Activated CD4-positive, alpha-beta T cell treated with anti-CD3 and anti-CD28 coated beads for 36 hours (primary cell): ENCODE measurements at regions of chr15 and their contacts with region 1.

Region 1: GRCh38 chr15:68820295-68821189 is at the start of gene ANP32A:
- DNase-seq: peak; percentile 98
- ATAC-seq: peak; percentile 76
- H3K4me3 Mint-ChIP-seq: peak within 1 kb of the TSS; percentile 99
- H3K27ac Mint-ChIP-seq: peak within 1 kb of the TSS; percentile 98
- H3K4me1 Mint-ChIP-seq: peaks cover 26% of the 10 kb centered on the region
- H3K27me3 Mint-ChIP-seq: no peaks in the 10 kb centered on the region
- total RNA-seq, gene ANP32A: 252 to 439 TPM

Region 2: GRCh38 chr15:68229386-68230156 is 591.0 kb before region 1 on chr15 and contains the start of gene CLN6:
- CTCF ChIA-PET with region 1: no interaction called
- POLR2A ChIA-PET with region 1: no interaction called
- intact Hi-C with region 1: loop called in 1 of 2 experiments (anchors 5 kb)
- DNase-seq: peak; percentile 88
- ATAC-seq: peak; percentile 88
- H3K4me3 Mint-ChIP-seq: peak within 1 kb of the TSS; percentile 99
- H3K27ac Mint-ChIP-seq: peak within 1 kb of the TSS; percentile 95
- H3K4me1 Mint-ChIP-seq: peaks cover 47% of the 10 kb centered on the region
- H3K27me3 Mint-ChIP-seq: no peaks in the 10 kb centered on the region
- total RNA-seq, gene CLN6: 45.1 to 48.2 TPM

Region 3: DNA sequence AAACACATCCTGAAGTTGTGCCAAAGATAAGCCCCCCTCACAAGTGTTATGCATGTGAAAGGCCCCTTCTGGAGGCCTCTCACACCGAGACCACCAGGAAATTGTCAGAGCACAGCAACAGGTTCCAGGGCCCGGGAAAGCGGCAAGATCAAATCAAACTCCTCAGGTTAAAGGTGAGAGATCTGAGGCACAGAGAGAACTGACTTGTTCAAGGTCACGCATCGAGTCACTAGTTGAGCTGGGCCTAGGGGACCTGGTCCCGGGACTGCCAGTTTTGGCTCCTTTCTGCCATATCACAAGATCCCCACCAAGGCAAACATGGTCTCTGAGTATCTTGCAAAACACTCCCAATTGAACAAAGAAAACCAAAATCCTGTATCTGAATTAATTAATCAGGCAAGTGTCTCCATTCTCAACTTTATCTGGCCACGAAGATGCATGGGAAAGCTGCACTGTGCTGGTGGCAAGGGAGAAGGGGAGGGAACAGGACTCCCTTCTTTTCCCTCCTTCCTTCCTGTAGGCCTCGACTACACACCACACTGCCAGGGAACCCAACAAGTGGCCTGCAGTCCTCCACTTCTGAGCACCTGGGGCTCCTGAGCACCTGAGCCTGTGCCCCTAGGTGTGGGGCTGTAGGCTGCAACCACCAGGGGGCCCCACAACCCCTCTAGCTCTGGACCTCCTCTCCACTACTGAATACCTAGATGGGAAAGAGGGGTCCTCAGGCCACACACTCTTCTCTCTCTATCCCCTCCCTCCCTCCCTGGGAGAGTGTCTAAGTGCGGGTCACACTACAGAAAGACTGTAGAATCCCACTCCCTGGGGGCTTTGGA is 37.1 kb before region 1 on chr15:
- CTCF ChIA-PET with region 1: interaction called, 3 read pairs
- POLR2A ChIA-PET with region 1: interaction called, 3 read pairs
- intact Hi-C with region 1: loop called (anchors 1 to 2 kb)
- DNase-seq: peak; percentile 78
- ATAC-seq: peak; percentile 52
- H3K4me3 Mint-ChIP-seq: peak overlapping the region; percentile 27
- H3K27ac Mint-ChIP-seq: peak overlapping the region; percentile 86
- H3K4me1 Mint-ChIP-seq: peaks cover 33% of the 10 kb centered on the region
- H3K27me3 Mint-ChIP-seq: no peaks in the 10 kb centered on the region

Region 4: DNA sequence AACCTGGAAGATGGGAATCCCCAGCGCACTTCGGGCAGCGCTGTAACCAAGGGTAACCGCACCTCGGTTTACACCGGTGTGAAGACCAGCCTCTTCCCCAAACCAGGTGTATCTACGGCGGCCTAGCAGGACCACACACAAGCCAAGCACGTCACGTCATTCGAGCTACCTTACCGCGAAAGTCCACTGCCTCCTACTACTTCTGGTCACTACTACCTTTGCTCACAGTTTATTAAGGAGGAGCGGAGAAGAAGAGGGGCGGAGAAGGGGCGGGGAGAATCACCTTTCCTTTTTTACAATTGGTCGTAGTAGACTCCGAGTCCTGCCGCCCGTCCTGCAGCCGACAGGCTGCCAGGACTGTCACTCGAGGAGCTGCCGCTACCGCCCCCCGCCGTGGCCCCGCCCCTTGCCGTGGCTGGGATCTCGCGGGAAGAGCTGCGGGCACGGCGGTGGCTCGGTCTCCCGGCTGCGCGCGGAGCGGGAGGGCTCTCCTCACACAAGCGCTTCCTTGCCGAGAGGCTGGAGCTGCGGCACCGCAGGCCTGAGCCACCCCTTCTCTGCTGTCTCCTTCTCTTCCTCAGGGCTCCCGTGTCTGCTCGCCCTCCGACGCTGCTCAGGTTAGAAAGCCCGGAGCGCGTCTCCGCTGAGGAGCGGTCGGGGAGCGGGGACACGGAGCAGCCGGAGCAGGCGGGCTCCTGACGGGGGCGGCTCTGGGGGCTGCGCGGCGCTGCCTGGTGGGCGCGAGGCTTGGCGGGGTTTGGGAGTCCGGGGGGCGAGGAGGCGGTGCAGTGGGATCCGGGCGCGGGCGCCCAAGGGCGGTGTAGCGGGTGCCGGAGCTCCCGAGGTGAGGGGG is 339.8 kb after region 1 on chr15 and contains the start of gene GLCE:
- CTCF ChIA-PET with region 1: no interaction called
- POLR2A ChIA-PET with region 1: no interaction called
- intact Hi-C with region 1: loop called in 1 of 2 experiments (anchors 2 kb)
- DNase-seq: peak; percentile 96
- ATAC-seq: peak; percentile 98
- H3K4me3 Mint-ChIP-seq: peak within 1 kb of the TSS; percentile 90
- H3K27ac Mint-ChIP-seq: peak within 1 kb of the TSS; percentile 84
- H3K4me1 Mint-ChIP-seq: peaks cover 16% of the 10 kb centered on the region
- H3K27me3 Mint-ChIP-seq: no peaks in the 10 kb centered on the region
- total RNA-seq, gene GLCE: 3.6 to 4.2 TPM

Region 5: GRCh38 chr15:69443032-69443611 is 622.6 kb after region 1 on chr15:
- CTCF ChIA-PET with region 1: no interaction called
- POLR2A ChIA-PET with region 1: no interaction called
- intact Hi-C with region 1: loop called in 1 of 2 experiments (anchors 10 kb)
- DNase-seq: no peak
- ATAC-seq: peak; percentile 96
- H3K4me3 Mint-ChIP-seq: no peak overlapping the region
- H3K27ac Mint-ChIP-seq: peak overlapping the region; percentile 72
- H3K4me1 Mint-ChIP-seq: peaks cover 18% of the 10 kb centered on the region
- H3K27me3 Mint-ChIP-seq: no peaks in the 10 kb centered on the region